ENCODE measurements at regions of chr20 and their contacts with region 1.

Region 1: DNA sequence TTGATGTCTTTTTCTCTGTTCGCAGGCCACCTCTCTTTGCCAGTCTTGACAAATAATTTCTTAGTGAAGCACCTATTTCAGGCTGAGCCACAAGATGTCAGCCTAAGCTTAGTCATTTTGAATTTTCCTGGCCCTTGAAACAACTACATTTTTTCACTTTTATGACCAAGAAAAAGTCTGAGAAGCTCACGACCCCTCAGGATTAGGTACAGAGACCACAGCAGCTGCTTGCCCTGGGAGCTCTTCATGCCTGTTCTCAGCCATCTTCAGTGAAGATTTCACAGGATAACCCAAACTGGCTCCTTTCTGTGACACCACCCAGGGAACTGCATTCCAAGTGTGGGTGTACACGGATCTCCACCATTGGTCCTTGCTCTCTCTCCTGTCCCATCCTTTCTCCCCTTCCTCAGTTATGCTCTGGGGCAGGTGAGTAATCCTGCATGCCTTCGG is 38.4 kb upstream of the SPTLC3 start:
- DNase-seq: peak; percentile 56
- H3K4me3 Mint-ChIP-seq: no peak overlapping the region
- H3K27ac Mint-ChIP-seq: no peak overlapping the region
- H3K4me1 Mint-ChIP-seq: no peaks in the 10 kb centered on the region
- H3K27me3 Mint-ChIP-seq: no peaks in the 10 kb centered on the region
- CTCF ChIP-seq: peak; percentile 70

Region 2: DNA sequence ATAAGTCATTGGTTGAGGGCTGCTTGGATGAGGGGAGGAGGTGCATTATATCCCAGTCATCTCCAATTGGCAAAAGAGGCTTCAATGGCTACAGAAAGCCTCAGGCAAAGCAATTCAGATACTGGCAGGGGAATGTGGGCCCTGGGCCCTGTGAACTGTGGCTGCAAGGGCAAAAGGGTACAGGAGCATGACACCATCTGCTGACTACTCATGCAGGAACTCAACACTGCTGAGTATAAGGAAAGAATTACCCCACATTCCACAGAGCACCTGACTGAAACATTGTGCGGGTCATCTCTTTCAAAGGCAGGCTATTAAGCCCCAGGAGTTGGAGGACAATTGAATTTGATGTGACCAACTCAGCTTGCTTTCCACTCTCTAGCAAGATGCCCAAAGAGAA is 53.7 kb before region 1 on chr20:
- CTCF ChIA-PET with region 1: interaction called, 558 read pairs
- POLR2A ChIA-PET with region 1: no interaction called
- intact Hi-C with region 1: no loop called
- DNase-seq: no peak
- H3K4me3 Mint-ChIP-seq: no peak overlapping the region
- H3K27ac Mint-ChIP-seq: no peak overlapping the region
- H3K4me1 Mint-ChIP-seq: no peaks in the 10 kb centered on the region
- H3K27me3 Mint-ChIP-seq: no peaks in the 10 kb centered on the region
- CTCF ChIP-seq: no peak

Region 3: GRCh38 chr20:12956303-12956702 is 14.1 kb before region 1 on chr20:
- CTCF ChIA-PET with region 1: interaction called, 21 read pairs
- POLR2A ChIA-PET with region 1: interaction called, 3 read pairs
- intact Hi-C with region 1: no loop called
- DNase-seq: no peak
- H3K4me3 Mint-ChIP-seq: no peak overlapping the region
- H3K27ac Mint-ChIP-seq: no peak overlapping the region
- H3K4me1 Mint-ChIP-seq: no peaks in the 10 kb centered on the region
- H3K27me3 Mint-ChIP-seq: no peaks in the 10 kb centered on the region
- CTCF ChIP-seq: no peak

Region 4: DNA sequence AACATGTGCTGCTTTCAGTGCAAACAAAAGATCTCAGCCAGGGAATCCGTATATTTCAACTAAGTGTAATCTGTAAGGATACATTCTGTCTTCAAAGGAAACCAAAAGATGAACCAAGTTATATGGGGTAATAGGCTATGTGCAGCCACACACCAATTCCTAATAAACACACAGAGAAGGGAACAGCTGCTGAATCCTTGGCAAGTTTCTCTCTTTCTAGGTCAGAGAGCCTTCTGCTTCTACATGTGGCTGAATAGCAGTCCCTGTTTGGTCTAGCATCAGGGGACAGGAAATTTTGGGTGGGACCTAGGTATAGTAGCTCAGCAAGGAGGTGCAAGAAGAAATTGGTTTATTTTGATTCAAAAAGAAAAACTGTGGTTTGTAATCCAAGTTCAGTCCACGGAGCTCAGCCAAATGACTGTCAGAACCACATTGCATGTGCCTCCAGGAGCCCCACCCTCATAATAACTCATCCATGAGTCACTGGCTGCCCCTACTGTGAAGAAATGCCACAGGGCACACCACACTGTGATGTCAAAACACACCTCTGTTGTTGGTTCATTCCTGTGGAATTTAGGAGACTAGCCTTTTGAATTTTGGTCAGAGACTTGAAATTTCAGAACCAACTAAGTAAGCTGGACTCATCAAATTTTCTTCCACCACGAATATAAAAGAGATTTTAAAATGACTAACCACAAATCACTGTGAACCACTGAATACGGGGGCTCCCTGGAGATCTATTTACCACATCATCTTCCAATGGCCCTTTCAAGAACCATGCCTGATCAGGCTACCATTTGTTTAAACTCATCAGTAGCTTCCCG is 59.5 kb after region 1 on chr20:
- CTCF ChIA-PET with region 1: interaction called, 21 read pairs
- POLR2A ChIA-PET with region 1: interaction called, 11 read pairs
- intact Hi-C with region 1: no loop called
- DNase-seq: peak; percentile 97
- H3K4me3 Mint-ChIP-seq: peak overlapping the region; percentile 57
- H3K27ac Mint-ChIP-seq: peak overlapping the region; percentile 97
- H3K4me1 Mint-ChIP-seq: peaks cover 69% of the 10 kb centered on the region
- H3K27me3 Mint-ChIP-seq: no peaks in the 10 kb centered on the region
- CTCF ChIP-seq: no peak

Region 5: DNA sequence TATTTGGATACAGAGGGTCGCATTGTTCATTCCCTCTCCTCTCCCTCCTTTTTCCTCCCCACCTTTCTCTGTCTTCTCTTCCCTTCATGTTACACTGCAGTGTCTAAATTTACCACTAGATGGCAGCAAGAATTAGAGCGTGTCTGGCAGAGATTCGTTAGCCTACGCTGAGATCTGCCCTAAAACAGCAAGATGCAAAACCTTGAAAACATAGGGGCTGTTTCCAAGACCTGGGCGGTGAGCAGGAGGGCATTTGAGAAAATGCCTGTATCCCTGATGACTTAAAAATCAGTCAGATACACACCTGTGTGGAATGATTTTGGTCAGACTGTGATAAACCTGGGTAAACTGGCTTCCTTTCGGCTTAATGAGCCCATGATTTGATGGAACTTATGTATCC is 149.2 kb after region 1 on chr20:
- CTCF ChIA-PET with region 1: interaction called, 34 read pairs
- POLR2A ChIA-PET with region 1: interaction called, 3 read pairs
- intact Hi-C with region 1: no loop called
- DNase-seq: peak; percentile 77
- H3K4me3 Mint-ChIP-seq: no peak overlapping the region
- H3K27ac Mint-ChIP-seq: no peak overlapping the region
- H3K4me1 Mint-ChIP-seq: peaks cover 6% of the 10 kb centered on the region
- H3K27me3 Mint-ChIP-seq: no peaks in the 10 kb centered on the region
- CTCF ChIP-seq: peak; percentile 69

Region 6: DNA sequence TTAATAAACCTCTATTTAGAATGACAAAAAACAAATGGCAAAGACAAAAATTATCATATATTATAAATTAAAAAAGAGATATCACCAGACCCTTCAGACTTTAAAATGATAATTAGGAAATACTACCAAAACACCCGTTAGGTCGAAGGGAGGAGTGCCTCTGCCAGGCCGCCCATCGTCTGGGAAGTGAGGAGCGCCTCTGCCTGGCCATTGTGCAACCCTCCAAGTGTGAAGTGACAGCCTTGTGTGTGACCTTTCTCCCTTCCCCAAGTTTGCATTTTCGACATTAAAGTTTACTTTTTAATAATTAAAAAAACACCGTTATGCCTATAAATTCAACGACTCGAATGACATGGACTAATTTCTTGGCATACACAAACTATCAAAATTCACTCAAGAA is 732.9 kb after region 1 on chr20:
- CTCF ChIA-PET with region 1: no interaction called
- POLR2A ChIA-PET with region 1: no interaction called
- intact Hi-C with region 1: loop called (anchors 5 kb)
- DNase-seq: no peak
- H3K4me3 Mint-ChIP-seq: no peak overlapping the region
- H3K27ac Mint-ChIP-seq: no peak overlapping the region
- H3K4me1 Mint-ChIP-seq: no peaks in the 10 kb centered on the region
- H3K27me3 Mint-ChIP-seq: no peaks in the 10 kb centered on the region
- CTCF ChIP-seq: no peak